ENCODE measurements at regions of chr4 and their contacts with region 1.

Region 1: DNA sequence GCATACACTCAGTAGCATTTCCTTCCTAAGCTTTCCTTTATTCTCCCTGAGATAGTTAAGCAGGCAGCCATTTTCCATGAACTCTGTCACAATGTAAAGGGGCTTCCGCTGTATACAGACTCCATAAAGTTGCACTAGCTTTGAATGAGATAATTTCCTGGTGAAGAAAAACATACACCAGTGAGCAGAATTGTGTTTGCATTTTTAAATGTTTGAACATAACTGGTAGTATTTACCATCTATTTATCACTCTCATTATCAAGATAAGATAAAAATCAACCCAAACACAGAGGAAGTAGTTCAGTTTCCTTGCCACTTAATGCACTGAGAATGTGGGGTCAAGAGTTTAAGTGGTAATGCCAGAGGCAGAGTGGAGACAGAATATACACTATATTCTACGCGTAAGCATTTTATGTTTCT is 54.1 kb downstream of the TXK start:
- DNase-seq: no peak
- H3K4me3 ChIP-seq: no peak overlapping the region
- H3K27ac ChIP-seq: no peak overlapping the region
- H3K4me1 ChIP-seq: peaks cover 5% of the 10 kb centered on the region; the same call in 1 of the 2 replicates
- H3K27me3 ChIP-seq: peaks cover 19% of the 10 kb centered on the region

Region 2: GRCh38 chr4:47187608-47188007 is 892.4 kb before region 1 on chr4:
- in situ Hi-C with region 1: no loop called
- DNase-seq: no peak
- H3K4me3 ChIP-seq: no peak overlapping the region
- H3K27ac ChIP-seq: no peak overlapping the region
- H3K4me1 ChIP-seq: no peaks in the 10 kb centered on the region
- H3K27me3 ChIP-seq: no peaks in the 10 kb centered on the region

Region 3: GRCh38 chr4:48008021-48008596 is 71.9 kb before region 1 on chr4:
- in situ Hi-C with region 1: loop called (anchors 10 kb)
- DNase-seq: no peak
- H3K4me3 ChIP-seq: no peak overlapping the region
- H3K27ac ChIP-seq: no peak overlapping the region
- H3K4me1 ChIP-seq: no peaks in the 10 kb centered on the region
- H3K27me3 ChIP-seq: no peaks in the 10 kb centered on the region

Region 4: GRCh38 chr4:48315728-48316630 is 236.0 kb after region 1 on chr4:
- in situ Hi-C with region 1: no loop called
- DNase-seq: peak; percentile 78
- H3K4me3 ChIP-seq: no peak overlapping the region
- H3K27ac ChIP-seq: no peak overlapping the region
- H3K4me1 ChIP-seq: peaks cover 6% of the 10 kb centered on the region
- H3K27me3 ChIP-seq: no peaks in the 10 kb centered on the region